Calu3 (cell line): ENCODE measurements at regions of chr14 and their contacts with region 1.

Region 1: GRCh38 chr14:60744566-60744965 is 10.0 kb downstream of the MNAT1 start:
- DNase-seq: no peak
- H3K4me3 Mint-ChIP-seq: no peak overlapping the region
- H3K27ac Mint-ChIP-seq: no peak overlapping the region
- H3K4me1 Mint-ChIP-seq: no peaks in the 10 kb centered on the region
- H3K27me3 Mint-ChIP-seq: no peaks in the 10 kb centered on the region
- CTCF ChIP-seq: no peak

Region 2: GRCh38 chr14:60657456-60658210 is 86.9 kb before region 1 on chr14:
- CTCF ChIA-PET with region 1: no interaction called
- intact Hi-C with region 1: no loop called
- DNase-seq: peak; percentile 10
- H3K4me3 Mint-ChIP-seq: peak overlapping the region; percentile 91
- H3K27ac Mint-ChIP-seq: peak overlapping the region; percentile 72
- H3K4me1 Mint-ChIP-seq: no peaks in the 10 kb centered on the region
- H3K27me3 Mint-ChIP-seq: peaks cover 23% of the 10 kb centered on the region
- CTCF ChIP-seq: no peak

Region 3: GRCh38 chr14:60796434-60796833 is 51.9 kb after region 1 on chr14:
- CTCF ChIA-PET with region 1: no interaction called
- intact Hi-C with region 1: loop called (anchors 5 kb)
- DNase-seq: no peak
- H3K4me3 Mint-ChIP-seq: no peak overlapping the region
- H3K27ac Mint-ChIP-seq: no peak overlapping the region
- H3K4me1 Mint-ChIP-seq: no peaks in the 10 kb centered on the region
- H3K27me3 Mint-ChIP-seq: no peaks in the 10 kb centered on the region
- CTCF ChIP-seq: no peak

Region 4: DNA sequence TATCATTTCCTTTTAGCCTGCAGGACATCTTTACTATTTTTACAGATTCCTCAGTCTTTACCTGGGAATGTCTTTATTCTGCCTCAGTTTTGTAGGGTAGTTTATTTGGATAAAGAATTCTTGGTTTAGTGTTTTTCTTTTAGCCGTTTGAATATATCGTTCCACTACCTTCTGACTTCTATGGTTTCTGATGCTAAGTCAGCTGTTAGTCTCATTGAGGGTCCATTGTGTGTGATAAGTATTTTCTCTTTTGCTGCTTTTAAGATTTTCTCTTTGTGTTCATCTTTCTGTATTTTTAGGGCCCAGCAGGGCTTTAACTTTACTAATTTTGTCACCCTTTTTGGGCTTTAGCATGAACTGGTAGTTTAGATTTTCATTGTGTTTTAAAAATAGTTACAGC is 103.5 kb after region 1 on chr14:
- CTCF ChIA-PET with region 1: no interaction called
- intact Hi-C with region 1: no loop called
- DNase-seq: no peak
- H3K4me3 Mint-ChIP-seq: no peak overlapping the region
- H3K27ac Mint-ChIP-seq: no peak overlapping the region
- H3K4me1 Mint-ChIP-seq: no peaks in the 10 kb centered on the region
- H3K27me3 Mint-ChIP-seq: no peaks in the 10 kb centered on the region
- CTCF ChIP-seq: no peak